HEK293T (cell line): ENCODE measurements at regions of chr17 and their contacts with region 1.

Region 1: DNA sequence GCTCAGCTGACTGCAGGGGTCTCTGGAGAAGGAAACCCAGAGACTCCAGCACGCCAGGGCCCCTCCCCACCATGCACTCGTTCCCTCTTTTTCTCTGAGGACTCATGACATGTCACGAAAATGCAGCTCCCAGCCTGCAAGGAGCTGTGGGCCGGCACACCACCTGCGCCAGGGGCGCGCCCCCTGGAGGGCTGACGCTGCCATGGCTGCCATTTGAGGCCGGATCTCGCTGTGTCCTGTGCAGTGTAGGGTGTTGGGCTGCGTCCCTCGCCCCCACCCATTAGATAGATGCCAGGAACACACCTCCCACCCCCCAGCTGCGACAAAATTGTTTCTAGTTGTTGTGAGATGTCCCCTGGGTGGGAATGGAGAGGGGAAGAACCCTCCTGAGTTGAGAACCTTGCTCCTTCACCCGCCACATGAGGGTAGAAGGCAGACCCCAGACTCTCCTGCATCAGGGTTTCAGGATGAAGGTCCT is 8.2 kb downstream of the SYNGR2 start:
- DNase-seq: peak; percentile 82

Region 2: GRCh38 chr17:78013683-78014467 is 162.7 kb before region 1 on chr17:
- CTCF ChIA-PET with region 1: no interaction called
- POLR2A ChIA-PET with region 1: no interaction called
- DNase-seq: peak; percentile 52

Region 3: DNA sequence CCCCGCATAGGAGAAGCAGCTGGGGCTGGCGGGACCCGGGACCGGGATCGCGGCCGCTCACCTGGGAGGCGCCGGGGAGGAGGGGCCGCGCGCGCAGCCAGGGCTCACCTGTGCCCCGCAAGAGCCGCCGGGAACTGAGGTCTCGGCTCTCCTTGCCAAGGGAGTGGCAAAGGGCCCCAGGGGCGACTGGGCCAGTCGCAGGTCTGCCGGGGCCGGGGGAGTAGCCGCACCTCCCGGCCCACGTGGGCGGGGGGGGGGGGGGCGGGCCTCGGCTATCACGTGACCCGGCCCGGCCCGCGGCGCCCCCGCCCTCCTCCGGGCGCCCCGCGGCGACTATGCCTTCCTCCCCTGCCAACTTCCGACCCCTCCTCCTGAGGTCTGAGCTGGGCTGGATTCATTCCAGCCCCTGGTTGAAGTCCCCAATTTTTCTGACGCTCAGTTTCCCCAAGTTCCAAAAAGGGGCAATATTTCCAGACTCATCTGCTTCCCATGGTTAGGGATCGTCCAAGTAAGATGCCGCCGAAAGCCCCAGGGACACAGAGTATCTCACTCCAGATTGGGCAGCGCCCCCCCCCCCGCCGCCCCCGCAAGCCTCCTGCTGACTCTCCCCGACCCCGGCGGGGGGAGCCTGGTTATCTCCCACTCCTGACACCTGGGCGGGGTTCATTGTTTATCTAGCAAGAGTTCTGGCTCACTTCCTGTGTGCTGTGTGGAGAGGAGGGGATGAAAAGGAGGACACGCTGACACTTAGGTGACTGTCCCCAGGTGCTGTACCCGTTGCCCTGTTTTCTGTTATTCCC is 47.8 kb before region 1 on chr17 and contains the start of gene TMC6:
- CTCF ChIA-PET with region 1: no interaction called
- POLR2A ChIA-PET with region 1: no interaction called
- DNase-seq: peak; percentile 85

Region 4: GRCh38 chr17:78140169-78140976 is 36.2 kb before region 1 on chr17:
- CTCF ChIA-PET with region 1: interaction called, 15 read pairs
- POLR2A ChIA-PET with region 1: interaction called, 7 read pairs
- DNase-seq: peak; percentile 100